ENCODE measurements at regions of chr18 and their contacts with region 1.

Region 1: GRCh38 chr18:48711651-48712486 is 173.0 kb downstream of the CTIF start:
- DNase-seq: peak; percentile 28 to 69
- ATAC-seq: peak; percentile 51 to 76 (median 68)
- H3K4me3 ChIP-seq: no peak overlapping the region
- H3K27ac ChIP-seq: peak overlapping the region in 7 of 10 donors; percentile 14 to 92 (median 70)
- H3K4me1 ChIP-seq: peaks cover 23 to 86% (median 59%) of the 10 kb centered on the region in 9 donors
- H3K27me3 ChIP-seq: no peaks in the 10 kb centered on the region
- CTCF ChIP-seq: peak in 8 of 9 donors; percentile 50 to 75 (median 66)

Region 2: DNA sequence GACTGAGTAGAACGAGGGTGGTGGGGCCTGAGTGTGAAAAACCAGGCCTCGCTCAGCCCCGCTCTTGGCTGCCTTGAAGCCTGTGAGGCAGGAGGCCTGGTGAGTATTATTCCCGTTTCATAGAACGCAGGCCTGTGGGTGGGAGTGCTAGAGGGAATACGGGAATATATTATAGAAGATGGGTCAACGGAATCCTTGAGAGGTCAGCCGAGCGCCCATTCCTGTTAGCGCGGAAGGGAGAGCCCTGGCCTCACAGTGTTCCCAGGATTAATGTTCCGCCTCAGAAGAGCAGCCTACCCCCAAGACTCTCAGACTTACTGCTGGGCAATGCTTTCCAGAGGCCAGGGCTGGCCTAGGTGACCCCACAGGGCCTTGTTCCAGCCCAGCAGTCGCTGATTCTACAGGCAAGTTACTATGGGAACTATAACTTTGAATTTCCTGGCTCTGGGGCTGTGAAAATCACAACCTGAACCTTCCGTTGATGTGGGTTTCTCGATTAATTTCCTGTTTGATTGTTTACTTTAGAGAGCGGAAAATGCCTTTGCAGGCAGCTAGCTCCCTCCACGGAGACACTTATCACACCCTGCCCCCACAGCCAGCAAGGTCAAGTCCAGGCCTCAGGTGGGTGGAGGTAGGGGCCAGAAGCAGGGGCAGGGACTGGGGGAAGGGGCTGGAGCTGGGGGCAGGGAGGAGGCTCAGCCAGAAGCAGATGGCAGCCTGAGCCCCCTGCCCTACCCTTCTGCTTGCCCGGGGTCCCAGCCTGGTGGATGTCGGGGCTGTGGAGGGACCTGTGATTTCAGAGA is 130.6 kb after region 1 on chr18:
- intact Hi-C with region 1: loop called in 2 of 10 experiments (anchors 10 kb)
- DNase-seq: peak; percentile 42 to 65
- ATAC-seq: peak; percentile 37 to 85 (median 76)
- H3K4me3 ChIP-seq: no peak overlapping the region
- H3K27ac ChIP-seq: peak overlapping the region; percentile 72 to 94 (median 84)
- H3K4me1 ChIP-seq: peaks cover 12 to 78% (median 63%) of the 10 kb centered on the region in 9 donors
- H3K27me3 ChIP-seq: no peaks in the 10 kb centered on the region
- CTCF ChIP-seq: no peak

Region 3: DNA sequence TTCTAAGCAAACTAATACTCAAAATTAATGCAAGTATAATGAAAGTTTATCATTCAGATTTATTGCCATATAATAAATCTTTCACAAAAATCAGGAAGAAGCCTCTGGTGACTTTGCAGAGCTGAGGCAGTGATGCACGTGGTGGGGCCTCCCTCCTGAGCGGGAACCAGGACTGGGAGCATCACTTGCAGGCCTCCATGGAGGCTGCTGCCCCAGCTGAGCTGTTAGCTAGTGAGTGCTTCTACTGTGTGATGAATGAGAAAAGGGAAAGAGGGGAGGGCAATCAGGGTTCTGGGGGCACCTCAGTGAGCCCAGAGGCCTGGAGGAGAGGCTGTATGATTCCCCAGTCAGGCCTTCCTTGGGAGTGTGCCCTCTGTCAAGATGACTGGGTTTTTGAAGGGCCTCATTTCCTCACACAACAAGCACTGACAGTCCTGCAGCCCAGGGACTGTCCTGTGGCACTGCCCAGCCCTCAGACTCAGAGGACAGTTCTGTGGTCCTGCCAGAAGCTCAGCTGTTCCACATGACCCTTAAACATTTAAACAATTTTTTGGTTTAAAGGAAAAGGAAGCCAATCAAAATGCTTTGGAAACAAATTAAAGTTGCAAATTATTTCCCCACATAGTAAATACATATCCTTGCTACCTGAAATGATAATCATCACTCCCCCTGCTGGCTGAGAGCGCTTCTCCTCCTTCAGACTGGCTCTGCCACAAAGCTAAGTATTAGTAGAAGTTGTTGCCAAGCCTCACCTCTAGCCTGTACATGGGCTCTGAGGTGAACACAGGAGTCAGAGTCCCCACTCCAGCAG is 329.8 kb after region 1 on chr18:
- intact Hi-C with region 1: loop called in 2 of 10 experiments (anchors 5 to 10 kb)
- DNase-seq: peak; percentile 37 to 66
- ATAC-seq: peak; percentile 56 to 86 (median 71)
- H3K4me3 ChIP-seq: no peak overlapping the region
- H3K27ac ChIP-seq: peak overlapping the region in 1 of 10 donors; percentile 22
- H3K4me1 ChIP-seq: peaks cover 0 to 14% (median 8%) of the 10 kb centered on the region in 9 donors
- H3K27me3 ChIP-seq: no peaks in the 10 kb centered on the region
- CTCF ChIP-seq: peak; percentile 49 to 75 (median 69)

Region 4: DNA sequence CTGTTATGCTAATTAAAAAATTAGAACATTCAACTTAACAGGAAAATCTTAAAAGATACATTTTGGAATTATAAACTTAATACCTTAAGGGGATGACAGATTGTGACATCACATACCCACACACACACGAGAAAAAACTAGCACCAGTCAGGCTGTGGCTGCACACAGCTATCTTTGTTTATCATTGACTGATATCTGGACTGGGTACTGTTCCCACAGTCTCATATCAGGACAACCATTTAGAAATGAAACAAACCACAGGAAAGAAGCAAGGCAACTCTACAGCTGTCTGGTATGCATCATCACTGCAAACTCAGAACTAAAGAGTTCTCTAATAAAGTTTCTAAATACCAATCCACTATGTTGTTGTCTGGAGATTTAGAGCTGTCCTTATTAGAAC is 449.8 kb after region 1 on chr18:
- intact Hi-C with region 1: loop called in 1 of 10 experiments (anchors 5 kb)
- DNase-seq: no peak
- ATAC-seq: peak in 1 of 8 donors; percentile 19
- H3K4me3 ChIP-seq: no peak overlapping the region
- H3K27ac ChIP-seq: no peak overlapping the region
- H3K4me1 ChIP-seq: no peaks in the 10 kb centered on the region
- H3K27me3 ChIP-seq: no peaks in the 10 kb centered on the region
- CTCF ChIP-seq: no peak

Region 5: DNA sequence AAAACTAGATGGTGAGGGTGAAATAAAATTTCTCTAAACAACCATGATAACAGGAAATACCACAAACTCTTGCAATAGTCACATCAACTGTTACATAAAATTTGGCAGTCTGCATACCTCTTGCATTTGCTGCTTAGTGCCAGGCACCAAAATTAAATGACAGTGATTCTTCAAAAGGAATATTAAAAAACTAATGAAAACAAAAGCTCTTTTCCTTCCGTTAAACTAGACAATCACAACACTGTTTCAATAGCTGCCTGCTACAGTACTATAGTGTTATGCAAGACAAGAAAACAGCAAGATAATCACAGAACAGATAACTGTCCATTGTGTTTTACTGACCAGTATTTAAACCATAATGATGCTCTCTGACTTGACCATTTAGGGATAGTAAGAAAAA is 477.9 kb after region 1 on chr18:
- intact Hi-C with region 1: loop called in 1 of 10 experiments (anchors 10 kb)
- DNase-seq: no peak
- ATAC-seq: no peak
- H3K4me3 ChIP-seq: no peak overlapping the region
- H3K27ac ChIP-seq: no peak overlapping the region
- H3K4me1 ChIP-seq: peaks cover 0 to 24% (median 11%) of the 10 kb centered on the region in 9 donors
- H3K27me3 ChIP-seq: no peaks in the 10 kb centered on the region
- CTCF ChIP-seq: no peak

Measured in heart right ventricle (tissue), 16 donors.